ENCODE measurements at regions of chr20 and their contacts with region 1.

Region 1: GRCh38 chr20:14860410-14860814 is 523.0 kb upstream of the FLRT3 start:
- DNase-seq: no peak
- H3K4me3 Mint-ChIP-seq: no peak overlapping the region
- H3K27ac Mint-ChIP-seq: no peak overlapping the region
- H3K4me1 Mint-ChIP-seq: no peaks in the 10 kb centered on the region
- H3K27me3 Mint-ChIP-seq: no peaks in the 10 kb centered on the region

Region 2: GRCh38 chr20:14595051-14595450 is 265.4 kb before region 1 on chr20:
- intact Hi-C with region 1: no loop called
- DNase-seq: no peak
- H3K4me3 Mint-ChIP-seq: no peak overlapping the region
- H3K27ac Mint-ChIP-seq: no peak overlapping the region
- H3K4me1 Mint-ChIP-seq: no peaks in the 10 kb centered on the region
- H3K27me3 Mint-ChIP-seq: no peaks in the 10 kb centered on the region

Region 3: GRCh38 chr20:14955399-14955798 is 95.0 kb after region 1 on chr20:
- intact Hi-C with region 1: loop called (anchors 2 kb)
- DNase-seq: no peak
- H3K4me3 Mint-ChIP-seq: no peak overlapping the region
- H3K27ac Mint-ChIP-seq: no peak overlapping the region
- H3K4me1 Mint-ChIP-seq: no peaks in the 10 kb centered on the region
- H3K27me3 Mint-ChIP-seq: no peaks in the 10 kb centered on the region